ENCODE measurements at regions of chr9 and their contacts with region 1.

Region 1: GRCh38 chr9:2023532-2023931 is 8.4 kb downstream of the SMARCA2 start:
- DNase-seq: no peak
- H3K4me3 Mint-ChIP-seq: peak overlapping the region; percentile 76
- H3K27ac Mint-ChIP-seq: peak overlapping the region; percentile 86
- H3K4me1 Mint-ChIP-seq: peaks cover 97% of the 10 kb centered on the region
- H3K27me3 Mint-ChIP-seq: no peaks in the 10 kb centered on the region

Region 2: DNA sequence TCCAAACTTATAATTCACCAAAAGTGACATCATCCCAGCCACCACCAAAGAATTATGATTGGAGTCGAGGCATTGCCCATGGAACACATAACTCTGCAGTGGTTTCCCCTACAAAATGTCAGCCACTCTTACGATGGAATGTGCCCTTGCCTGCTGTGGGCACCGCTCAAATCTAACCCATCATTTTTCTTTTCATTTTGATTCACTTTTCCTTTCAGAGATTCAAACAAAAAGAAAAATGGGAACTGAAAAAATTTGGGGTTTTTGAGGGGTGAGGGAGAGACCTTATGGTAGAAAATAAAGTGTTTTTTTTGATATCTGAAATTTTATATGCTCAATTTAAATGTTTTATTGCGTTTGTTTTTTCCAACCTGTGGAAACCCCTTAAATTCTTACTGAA is 19.7 kb after region 1 on chr9:
- intact Hi-C with region 1: no loop called
- DNase-seq: no peak
- H3K4me3 Mint-ChIP-seq: no peak overlapping the region
- H3K27ac Mint-ChIP-seq: no peak overlapping the region
- H3K4me1 Mint-ChIP-seq: peaks cover 39% of the 10 kb centered on the region
- H3K27me3 Mint-ChIP-seq: no peaks in the 10 kb centered on the region

Region 3: GRCh38 chr9:2053883-2054845 is 30.6 kb after region 1 on chr9:
- intact Hi-C with region 1: loop called (anchors 1 kb)
- DNase-seq: peak; percentile 68
- H3K4me3 Mint-ChIP-seq: peak overlapping the region; percentile 24
- H3K27ac Mint-ChIP-seq: peak overlapping the region; percentile 56
- H3K4me1 Mint-ChIP-seq: peaks cover 48% of the 10 kb centered on the region
- H3K27me3 Mint-ChIP-seq: no peaks in the 10 kb centered on the region

Measured in activated T-helper 1 cell treated with anti-CD3 and anti-CD28 coated beads, Interleukin-12 subunit alpha, Interleukin-12 subunit beta, Interleukin-2, Interleukin-4 antibody, amounts not matched to agents 30 ng/mL and 10 ng/mL and 1 ng/mL, durations not matched to agents 14 hours and 24 hours and 36 hours (primary cell).